CD8-positive, alpha-beta T cell (primary cell): ENCODE measurements at regions of chr11 and their contacts with region 1.

Region 1: GRCh38 chr11:70834277-70834940 is 418.0 kb downstream of the SHANK2 start:
- DNase-seq: no peak
- ATAC-seq: no peak
- H3K4me3 ChIP-seq: no peak overlapping the region
- H3K4me3 Mint-ChIP-seq: no peak overlapping the region
- H3K27ac ChIP-seq: no peak overlapping the region
- H3K27ac Mint-ChIP-seq: no peak overlapping the region
- H3K4me1 ChIP-seq: no peaks in the 10 kb centered on the region
- H3K4me1 Mint-ChIP-seq: no peaks in the 10 kb centered on the region
- H3K27me3 ChIP-seq: no peaks in the 10 kb centered on the region
- H3K27me3 Mint-ChIP-seq: peaks cover 4% of the 10 kb centered on the region
- CTCF ChIP-seq: no peak

Region 2: GRCh38 chr11:70815485-70815861 is 18.9 kb before region 1 on chr11:
- CTCF ChIA-PET with region 1: interaction called, 10 read pairs
- POLR2A ChIA-PET with region 1: no interaction called
- intact Hi-C with region 1: no loop called
- DNase-seq: no peak
- ATAC-seq: no peak
- H3K4me3 ChIP-seq: no peak overlapping the region
- H3K4me3 Mint-ChIP-seq: no peak overlapping the region
- H3K27ac ChIP-seq: no peak overlapping the region
- H3K27ac Mint-ChIP-seq: no peak overlapping the region
- H3K4me1 ChIP-seq: no peaks in the 10 kb centered on the region
- H3K4me1 Mint-ChIP-seq: no peaks in the 10 kb centered on the region
- H3K27me3 ChIP-seq: no peaks in the 10 kb centered on the region
- H3K27me3 Mint-ChIP-seq: peaks cover 2% of the 10 kb centered on the region
- CTCF ChIP-seq: no peak